BJ (cell line): ENCODE measurements at regions of chr14 and their contacts with region 1.

Region 1: DNA sequence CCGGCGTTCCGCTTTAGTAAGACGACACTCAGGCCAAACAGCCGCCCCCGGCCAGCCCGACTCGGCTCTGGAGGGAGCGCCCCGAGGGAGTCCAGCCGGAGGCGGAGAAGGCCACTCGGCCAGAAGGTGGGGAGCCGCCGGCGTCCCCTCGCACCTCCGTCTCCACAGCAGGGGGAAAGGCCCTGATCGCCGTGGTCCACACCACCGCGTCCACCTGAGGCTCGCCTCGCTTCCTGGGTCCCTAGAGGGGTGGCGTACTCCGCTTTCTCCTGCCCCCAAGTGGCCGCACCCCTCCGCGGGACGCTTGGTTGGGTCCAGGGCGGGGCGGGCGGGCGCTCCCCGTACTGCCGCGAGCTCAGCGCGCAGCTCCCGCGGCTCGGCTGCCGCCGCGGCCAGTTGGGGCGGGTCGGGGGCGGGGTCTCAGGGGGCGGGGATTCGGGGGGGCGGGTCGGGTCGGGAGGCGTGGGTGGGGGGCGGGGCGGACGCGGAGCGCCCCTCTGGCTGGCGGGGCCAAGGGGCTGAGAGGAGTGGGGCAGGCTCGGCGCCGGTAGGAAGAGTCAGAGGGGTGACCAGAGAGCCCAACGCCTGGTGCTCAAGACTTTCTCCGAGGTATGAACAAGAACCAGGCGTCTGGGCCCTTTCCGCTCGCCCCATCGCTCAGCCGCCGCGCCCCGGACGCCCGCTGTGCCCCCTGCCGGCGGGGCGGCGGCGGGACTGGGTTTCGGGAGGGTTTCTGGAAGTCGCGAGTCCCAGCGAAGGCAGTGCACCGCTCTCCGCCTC is at the start of gene FRMD6:
- DNase-seq: peak; percentile 38
- H3K4me3 ChIP-seq: peak within 1 kb of the TSS; percentile 87
- H3K27me3 ChIP-seq: no peaks in the 10 kb centered on the region
- CTCF ChIP-seq: peak; percentile 55
- polyA plus RNA-seq, gene FRMD6: 507 and 540 TPM in 2 replicates

Region 2: GRCh38 chr14:51283402-51284085 is 368.0 kb before region 1 on chr14:
- CTCF ChIA-PET with region 1: interaction called, 20 read pairs
- POLR2A ChIA-PET with region 1: interaction called, 4 read pairs
- DNase-seq: peak; percentile 77
- H3K4me3 ChIP-seq: no peak overlapping the region
- H3K27me3 ChIP-seq: no peaks in the 10 kb centered on the region
- CTCF ChIP-seq: peak; percentile 67

Region 3: DNA sequence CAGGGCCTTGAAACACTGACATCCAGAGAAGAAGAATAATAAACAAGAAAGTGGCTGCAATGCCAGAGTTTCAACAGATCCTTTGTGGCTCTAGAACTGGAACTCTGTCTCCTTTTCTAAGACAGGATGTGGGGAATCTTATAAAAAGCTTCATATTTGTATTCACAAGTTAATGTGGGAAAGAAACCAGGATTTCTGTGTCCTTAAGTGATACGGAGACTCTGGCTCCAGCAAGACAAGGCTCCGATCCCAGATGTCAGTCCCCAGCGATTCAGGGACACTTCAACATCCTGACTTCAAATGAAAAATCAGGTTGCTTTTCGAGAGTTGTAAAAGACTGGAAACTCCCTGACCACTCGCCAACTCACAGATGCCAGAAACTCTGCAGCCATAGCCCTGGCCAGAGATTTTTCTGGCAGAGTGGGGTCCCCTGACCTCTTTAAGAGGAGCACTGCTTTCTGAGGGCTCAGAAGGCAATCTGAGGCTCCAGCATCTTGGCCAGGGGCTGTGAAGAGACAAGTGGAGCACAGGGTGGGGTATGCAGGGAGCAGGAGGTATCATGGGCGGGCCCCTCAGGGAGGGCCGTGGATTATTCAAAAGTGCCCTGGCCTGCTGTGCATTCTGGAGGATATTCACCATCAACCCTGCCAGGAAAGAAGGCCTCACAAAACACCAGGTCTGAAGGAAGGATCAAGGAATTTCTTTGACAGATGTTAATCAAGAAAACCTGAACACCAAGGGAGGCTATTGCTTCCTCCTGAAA is 358.2 kb before region 1 on chr14:
- CTCF ChIA-PET with region 1: interaction called, 6 read pairs
- POLR2A ChIA-PET with region 1: interaction called, 11 read pairs
- DNase-seq: peak; percentile 53
- H3K4me3 ChIP-seq: no peak overlapping the region
- H3K27me3 ChIP-seq: no peaks in the 10 kb centered on the region
- CTCF ChIP-seq: no peak

Region 4: GRCh38 chr14:51382506-51382905 is 269.1 kb before region 1 on chr14:
- CTCF ChIA-PET with region 1: interaction called, 3 read pairs
- POLR2A ChIA-PET with region 1: interaction called, 12 read pairs
- DNase-seq: no peak
- H3K4me3 ChIP-seq: no peak overlapping the region
- H3K27me3 ChIP-seq: no peaks in the 10 kb centered on the region
- CTCF ChIP-seq: no peak

Region 5: DNA sequence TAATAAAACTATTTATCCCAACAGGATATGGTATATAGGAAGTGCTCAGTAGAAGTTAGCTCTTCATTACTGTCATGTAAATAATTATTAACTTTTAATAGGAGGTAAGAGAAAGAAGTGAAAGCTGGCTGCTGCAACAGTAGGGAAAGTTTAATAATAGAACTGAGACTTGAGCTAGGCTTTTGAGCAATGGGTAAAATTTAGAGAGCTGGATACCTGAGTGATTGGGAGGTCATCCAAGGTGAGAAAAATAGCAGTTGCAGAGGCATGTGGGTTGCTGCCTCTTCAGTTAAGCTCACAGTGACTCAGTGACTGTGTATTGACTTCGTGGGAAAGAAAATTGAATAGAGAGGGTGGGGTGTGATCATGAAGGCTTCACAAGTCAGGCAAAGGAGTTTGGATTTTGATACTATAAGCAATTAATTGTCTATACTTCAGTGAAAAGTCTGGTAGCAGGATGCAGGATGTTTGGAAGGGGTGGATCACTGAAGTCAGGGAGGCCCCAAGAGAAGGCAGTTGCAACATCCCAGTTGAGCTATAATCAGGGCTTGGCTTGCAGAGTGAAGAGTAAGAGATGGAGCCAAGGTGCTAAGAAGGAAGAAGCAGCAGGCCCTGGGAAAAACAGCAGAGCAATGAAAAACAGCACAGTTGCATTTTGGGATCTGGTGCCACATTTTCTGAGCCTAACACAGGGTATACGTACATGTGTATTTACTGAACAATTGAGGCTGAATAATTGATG is 171.8 kb before region 1 on chr14:
- CTCF ChIA-PET with region 1: no interaction called
- POLR2A ChIA-PET with region 1: no interaction called
- DNase-seq: no peak
- H3K4me3 ChIP-seq: no peak overlapping the region
- H3K27me3 ChIP-seq: no peaks in the 10 kb centered on the region
- CTCF ChIP-seq: no peak

Region 6: DNA sequence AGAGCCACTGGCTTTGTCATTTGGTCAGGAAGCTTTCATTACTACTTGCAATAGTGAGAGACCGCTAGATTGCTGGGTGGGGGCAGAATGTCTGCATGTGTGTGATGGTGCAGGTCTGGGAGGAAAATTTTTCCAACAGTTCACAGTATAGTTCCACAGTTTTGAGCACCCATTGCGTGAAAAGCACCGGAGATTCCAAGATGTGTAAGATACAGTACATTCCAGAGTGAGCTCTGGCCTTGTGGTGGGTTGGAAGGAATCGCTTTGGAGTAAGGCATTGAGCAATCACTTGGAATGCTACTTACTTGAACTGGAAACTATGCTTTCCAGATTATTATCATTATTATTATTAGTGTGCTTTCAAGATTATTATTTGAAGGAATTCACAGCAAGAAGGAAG is 47.5 kb before region 1 on chr14:
- CTCF ChIA-PET with region 1: interaction called, 3 read pairs
- POLR2A ChIA-PET with region 1: interaction called, 10 read pairs
- DNase-seq: peak; percentile 91
- H3K4me3 ChIP-seq: no peak overlapping the region
- H3K27me3 ChIP-seq: no peaks in the 10 kb centered on the region
- CTCF ChIP-seq: no peak

Region 7: DNA sequence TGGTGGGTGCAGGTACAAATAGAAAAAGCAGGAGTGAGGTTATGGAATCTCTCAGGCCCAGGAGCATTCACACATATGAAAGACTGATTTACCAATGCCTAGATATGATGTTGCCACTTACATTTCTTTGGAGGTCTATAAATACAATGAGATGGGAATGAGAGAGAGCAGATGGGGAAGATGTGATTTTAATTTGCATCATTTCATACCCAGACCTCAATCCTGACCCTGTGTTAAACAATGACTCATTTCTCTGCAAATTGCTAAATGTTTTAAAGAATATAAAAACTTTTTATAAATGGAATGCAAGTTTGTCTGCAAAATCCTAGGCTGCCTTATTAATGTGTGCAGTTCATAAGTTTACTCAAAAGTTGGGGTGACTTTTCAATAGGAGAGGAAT is 170.2 kb after region 1 on chr14:
- CTCF ChIA-PET with region 1: no interaction called
- POLR2A ChIA-PET with region 1: no interaction called
- DNase-seq: peak; percentile 62
- H3K4me3 ChIP-seq: no peak overlapping the region
- H3K27me3 ChIP-seq: peaks cover 1% of the 10 kb centered on the region; the same call in 1 of the 2 replicates
- CTCF ChIP-seq: no peak

Region 8: DNA sequence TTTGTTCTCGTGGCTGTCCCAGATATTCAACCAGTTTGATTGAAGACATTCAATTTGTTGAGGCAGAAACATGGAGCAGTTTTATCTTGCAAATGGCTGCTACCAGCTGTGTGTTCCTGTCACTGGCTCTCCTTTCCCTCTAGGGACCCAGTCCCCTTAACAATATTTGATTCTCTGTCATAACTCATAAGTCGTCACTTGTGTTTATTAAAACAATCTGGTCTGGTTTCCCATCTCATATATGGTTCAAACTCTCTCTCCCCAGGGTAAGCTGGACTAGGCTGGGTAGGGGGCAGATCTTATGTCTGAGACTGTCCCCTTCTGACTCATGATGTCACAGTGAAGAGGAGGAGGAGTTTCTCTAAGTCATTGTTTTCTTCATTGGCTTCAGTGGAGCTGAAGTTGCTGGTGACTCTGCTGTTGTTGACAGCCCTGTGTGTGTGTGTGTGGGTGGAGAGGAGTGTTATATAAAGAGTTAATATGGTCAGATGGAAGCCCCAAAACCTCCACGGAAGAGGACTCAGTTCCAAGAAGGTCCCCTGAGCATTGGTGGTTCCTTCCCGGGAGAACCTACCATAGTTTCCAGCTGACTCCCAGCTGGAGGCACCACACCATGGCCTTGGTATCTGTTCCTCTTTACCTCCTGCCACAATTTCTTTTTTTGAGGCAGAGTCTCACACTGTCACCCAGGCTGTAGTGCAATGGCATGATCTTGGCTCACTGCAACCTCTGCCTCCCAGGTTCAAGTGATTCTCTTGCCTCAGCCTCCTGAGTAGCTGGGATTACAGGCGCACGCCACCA is 192.7 kb after region 1 on chr14:
- CTCF ChIA-PET with region 1: no interaction called
- POLR2A ChIA-PET with region 1: no interaction called
- DNase-seq: no peak
- H3K4me3 ChIP-seq: no peak overlapping the region
- H3K27me3 ChIP-seq: no peaks in the 10 kb centered on the region
- CTCF ChIP-seq: no peak